CD4-positive, alpha-beta memory T cell (primary cell): ENCODE measurements at regions of chr22 and their contacts with region 1.

Region 1: GRCh38 chr22:38755911-38756532 is at the start of gene SUN2:
- DNase-seq: peak; percentile 92 to 95 (median 92)
- H3K4me3 ChIP-seq: peak within 1 kb of the TSS; percentile 72 to 98
- H3K4me3 Mint-ChIP-seq: peak within 1 kb of the TSS; percentile 97 to 99 (median 99)
- H3K27ac ChIP-seq: peak within 1 kb of the TSS; percentile 74
- H3K27ac Mint-ChIP-seq: peak within 1 kb of the TSS; percentile 90 to 99 (median 98)
- H3K4me1 ChIP-seq: peaks cover 64% of the 10 kb centered on the region
- H3K4me1 Mint-ChIP-seq: peaks cover 35 to 81% (median 53%) of the 10 kb centered on the region in 4 donors
- H3K27me3 ChIP-seq: no peaks in the 10 kb centered on the region
- H3K27me3 Mint-ChIP-seq: no peaks in the 10 kb centered on the region
- total RNA-seq, gene SUN2: 988 to 1,004 TPM

Region 2: DNA sequence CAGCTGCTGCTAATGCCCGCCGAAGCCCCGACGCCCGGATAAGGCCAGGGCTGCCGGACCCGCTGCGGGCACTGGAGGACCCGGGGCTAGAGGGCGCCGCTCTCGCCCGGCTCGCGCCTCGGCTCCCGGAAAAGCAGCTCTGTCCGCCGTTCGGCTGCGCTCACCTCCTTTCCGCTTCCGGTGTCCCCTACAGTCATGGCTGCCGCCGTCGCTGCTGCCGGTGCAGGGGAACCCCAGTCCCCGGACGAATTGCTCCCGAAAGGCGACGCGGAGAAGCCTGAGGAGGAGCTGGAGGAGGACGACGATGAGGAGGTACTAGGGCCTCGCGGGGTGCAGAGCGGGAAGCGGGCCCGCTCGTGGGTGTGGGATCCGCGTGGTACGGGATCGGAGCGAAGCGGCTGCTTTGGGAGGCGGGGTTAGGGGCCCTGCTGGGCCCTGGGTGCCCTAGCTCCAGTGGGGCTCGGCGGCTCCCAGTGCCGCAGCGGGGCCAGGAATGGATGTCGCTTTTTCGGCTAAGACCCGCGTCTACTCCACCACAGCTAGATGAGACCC is 74.2 kb before region 1 on chr22 and contains the start of gene TOMM22:
- CTCF ChIA-PET with region 1: interaction called, 4 read pairs
- POLR2A ChIA-PET with region 1: interaction called, 11 read pairs
- intact Hi-C with region 1: no loop called
- DNase-seq: peak; percentile 80 to 86 (median 82)
- H3K4me3 ChIP-seq: peak within 1 kb of the TSS; percentile 79 to 83
- H3K4me3 Mint-ChIP-seq: peak within 1 kb of the TSS; percentile 97 to 100 (median 99)
- H3K27ac ChIP-seq: peak within 1 kb of the TSS; percentile 92
- H3K27ac Mint-ChIP-seq: peak within 1 kb of the TSS; percentile 92 to 99 (median 99)
- H3K4me1 ChIP-seq: peaks cover 15% of the 10 kb centered on the region
- H3K4me1 Mint-ChIP-seq: peaks cover 8 to 29% (median 17%) of the 10 kb centered on the region in 4 donors
- H3K27me3 ChIP-seq: no peaks in the 10 kb centered on the region
- H3K27me3 Mint-ChIP-seq: peaks cover 0 to 1% of the 10 kb centered on the region in 2 donors
- total RNA-seq, gene TOMM22: 41.2 to 42.3 TPM

Region 3: DNA sequence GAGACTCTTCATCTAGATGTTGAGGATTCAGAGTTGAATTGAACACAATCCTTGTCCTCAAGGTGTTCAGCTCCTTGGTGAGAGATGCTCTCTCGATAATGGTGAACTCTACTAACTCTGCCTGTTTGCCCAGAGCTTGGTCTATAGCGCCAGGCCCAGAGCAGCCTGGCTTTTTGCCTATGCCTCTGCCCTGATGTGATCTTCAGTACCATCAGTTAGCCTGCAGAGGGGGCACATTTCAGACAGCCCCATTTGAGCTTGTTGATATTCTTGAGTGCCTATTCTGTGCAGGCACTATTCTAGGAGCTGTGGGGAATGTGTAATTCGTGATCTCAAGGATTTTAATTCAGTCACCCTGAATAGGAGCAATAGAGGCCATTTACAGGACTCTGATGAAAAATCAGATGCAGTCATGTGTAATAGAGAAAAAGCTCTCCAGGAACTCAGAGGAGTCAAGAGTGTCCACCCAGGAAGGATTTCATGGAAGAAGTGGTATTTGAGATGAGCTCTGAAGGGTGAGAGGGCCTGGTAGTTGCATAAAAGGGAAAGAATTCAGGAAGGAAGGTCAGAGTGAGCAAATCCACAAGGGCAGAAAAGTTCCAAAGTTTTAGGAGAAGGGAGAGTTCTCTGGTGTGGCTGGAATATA is 31.0 kb before region 1 on chr22:
- CTCF ChIA-PET with region 1: interaction called, 17 read pairs
- POLR2A ChIA-PET with region 1: interaction called, 1,746 read pairs
- intact Hi-C with region 1: loop called (anchors 5 kb)
- DNase-seq: peak in 3 of 5 donors; percentile 52 to 57 (median 54)
- H3K4me3 ChIP-seq: no peak overlapping the region
- H3K4me3 Mint-ChIP-seq: peak overlapping the region in 1 of 8 donors; percentile 63
- H3K27ac ChIP-seq: no peak overlapping the region
- H3K27ac Mint-ChIP-seq: peak overlapping the region; percentile 58 to 88 (median 77)
- H3K4me1 ChIP-seq: no peaks in the 10 kb centered on the region
- H3K4me1 Mint-ChIP-seq: peaks cover 6 to 14% (median 9%) of the 10 kb centered on the region in 4 donors
- H3K27me3 ChIP-seq: no peaks in the 10 kb centered on the region
- H3K27me3 Mint-ChIP-seq: no peaks in the 10 kb centered on the region

Region 4: DNA sequence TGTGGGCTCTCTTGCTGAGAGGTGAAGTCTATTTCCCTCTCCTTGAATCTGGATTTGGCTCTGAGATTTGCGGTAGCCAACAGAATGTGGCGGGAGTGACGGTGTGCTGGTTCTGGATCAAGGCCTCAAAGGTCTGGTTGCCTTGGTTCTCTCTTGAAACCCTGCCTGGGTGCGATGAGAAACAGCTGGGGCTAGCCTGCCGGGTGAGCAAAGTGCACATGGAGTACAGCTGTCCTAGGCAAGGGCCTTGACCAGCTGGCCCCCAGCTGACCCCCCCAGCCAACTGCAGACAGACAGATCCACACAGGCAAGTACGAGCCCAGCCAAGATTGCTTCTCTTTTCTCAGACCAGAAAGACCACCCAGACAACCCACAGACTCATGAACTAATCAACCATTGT is 11.0 kb before region 1 on chr22:
- CTCF ChIA-PET with region 1: interaction called, 12 read pairs
- POLR2A ChIA-PET with region 1: interaction called, 1,746 read pairs
- intact Hi-C with region 1: no loop called
- DNase-seq: peak in 1 of 5 donors; percentile 9
- H3K4me3 ChIP-seq: no peak overlapping the region
- H3K4me3 Mint-ChIP-seq: peak overlapping the region in 1 of 8 donors; percentile 13
- H3K27ac ChIP-seq: no peak overlapping the region
- H3K27ac Mint-ChIP-seq: peak overlapping the region; percentile 27 to 83 (median 61)
- H3K4me1 ChIP-seq: peaks cover 68% of the 10 kb centered on the region
- H3K4me1 Mint-ChIP-seq: peaks cover 10 to 51% (median 25%) of the 10 kb centered on the region in 4 donors
- H3K27me3 ChIP-seq: no peaks in the 10 kb centered on the region
- H3K27me3 Mint-ChIP-seq: no peaks in the 10 kb centered on the region

Region 5: DNA sequence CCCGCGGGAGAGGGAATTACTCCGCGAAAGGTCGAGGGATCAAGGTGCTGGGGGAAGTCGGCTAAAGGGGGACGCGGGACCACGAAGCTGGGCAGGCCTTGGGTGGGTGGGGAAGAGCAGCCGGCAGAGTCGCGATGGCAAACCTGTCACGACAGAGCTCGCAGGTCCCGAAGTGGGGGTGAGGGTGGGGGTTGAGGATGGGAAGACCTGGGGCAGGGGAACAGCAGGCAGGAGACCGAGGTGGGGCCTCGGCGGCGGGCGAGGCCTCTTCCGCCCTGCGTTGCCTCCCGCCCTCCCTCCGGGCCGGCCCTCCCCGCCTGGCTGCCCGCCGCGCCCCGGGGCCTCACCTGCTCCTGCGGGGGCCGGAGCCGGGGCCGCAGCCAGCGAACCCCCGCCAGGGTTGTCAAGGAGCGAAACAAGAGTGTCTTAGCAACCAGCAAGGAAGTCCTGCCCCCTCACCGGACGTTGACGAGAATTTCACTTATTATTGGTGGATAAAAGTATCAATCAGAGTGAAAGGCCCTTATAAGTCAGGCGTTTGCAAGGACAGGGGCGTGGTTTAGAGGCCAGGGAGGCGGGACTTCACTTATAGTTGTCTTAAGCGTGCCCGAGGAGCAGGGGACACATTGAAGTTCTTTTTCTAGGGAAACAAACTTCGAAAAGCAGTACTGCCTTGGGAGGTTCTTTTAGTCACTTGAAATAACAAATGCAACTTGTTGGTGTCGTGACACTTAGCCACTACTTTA is 37.9 kb after region 1 on chr22 and contains the start of gene DNAL4:
- CTCF ChIA-PET with region 1: interaction called, 3 read pairs
- POLR2A ChIA-PET with region 1: interaction called, 7 read pairs
- intact Hi-C with region 1: loop called (anchors 2 kb)
- DNase-seq: peak; percentile 93 to 96 (median 95)
- H3K4me3 ChIP-seq: peak within 1 kb of the TSS; percentile 52 to 62
- H3K4me3 Mint-ChIP-seq: peak within 1 kb of the TSS; percentile 88 to 93 (median 91)
- H3K27ac ChIP-seq: peak within 1 kb of the TSS; percentile 78
- H3K27ac Mint-ChIP-seq: peak within 1 kb of the TSS; percentile 88 to 97 (median 94)
- H3K4me1 ChIP-seq: peaks cover 16% of the 10 kb centered on the region
- H3K4me1 Mint-ChIP-seq: peaks cover 15 to 22% (median 18%) of the 10 kb centered on the region in 4 donors
- H3K27me3 ChIP-seq: no peaks in the 10 kb centered on the region
- H3K27me3 Mint-ChIP-seq: peaks cover 4 to 23% of the 10 kb centered on the region in 2 donors
- total RNA-seq, gene DNAL4: 8.6 to 9.6 TPM

Region 6: DNA sequence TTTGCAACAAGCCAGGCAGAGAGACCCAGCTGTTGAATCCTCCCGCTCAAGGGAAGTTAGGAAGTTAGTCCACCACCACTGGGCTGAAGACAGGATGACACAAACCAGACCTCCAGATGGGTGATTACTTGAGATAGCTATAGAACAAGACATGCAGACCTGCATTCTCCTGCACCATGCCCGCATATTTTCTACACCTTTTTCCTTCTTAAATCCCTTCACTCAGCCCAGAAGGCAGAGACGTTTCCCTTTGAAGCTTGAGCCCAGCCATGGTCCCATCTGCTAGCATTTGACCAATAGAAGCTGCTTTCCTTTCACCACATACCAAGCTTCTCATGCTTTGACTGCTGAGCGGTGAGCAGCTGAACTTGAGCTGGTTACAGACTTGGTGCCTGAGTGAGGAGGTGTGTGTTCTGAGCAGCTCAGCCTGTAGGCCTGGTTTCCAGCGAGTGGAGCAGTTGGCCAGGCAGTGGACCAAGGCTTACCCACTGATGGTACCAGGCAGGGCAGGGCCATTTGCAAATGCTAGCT is 145.2 kb after region 1 on chr22:
- CTCF ChIA-PET with region 1: no interaction called
- POLR2A ChIA-PET with region 1: no interaction called
- intact Hi-C with region 1: no loop called
- DNase-seq: no peak
- H3K4me3 ChIP-seq: no peak overlapping the region
- H3K4me3 Mint-ChIP-seq: peak overlapping the region in 4 of 8 donors; percentile 39 to 61 (median 48)
- H3K27ac ChIP-seq: no peak overlapping the region
- H3K27ac Mint-ChIP-seq: no peak overlapping the region
- H3K4me1 ChIP-seq: peaks cover 9% of the 10 kb centered on the region
- H3K4me1 Mint-ChIP-seq: peaks cover 0 to 16% (median 7%) of the 10 kb centered on the region in 4 donors
- H3K27me3 ChIP-seq: no peaks in the 10 kb centered on the region
- H3K27me3 Mint-ChIP-seq: peaks cover 3 to 4% of the 10 kb centered on the region in 2 donors